GM12878 (cell line): ENCODE measurements at regions of chr1 and their contacts with region 1.

Region 1: GRCh38 chr1:225554216-225554812 is 98.6 kb downstream of the ENAH start:
- DNase-seq: no peak
- ATAC-seq: peak; percentile 61
- H3K4me3 ChIP-seq: no peak overlapping the region
- H3K27ac ChIP-seq: no peak overlapping the region
- H3K4me1 ChIP-seq: no peaks in the 10 kb centered on the region
- H3K27me3 ChIP-seq: no peaks in the 10 kb centered on the region
- CTCF ChIP-seq: peak; percentile 45 to 55 (median 50); a peak in 5 of 6 replicates
- EP300 ChIP-seq: no peak
- POLR2A ChIP-seq: no peak
- RAD21 ChIP-seq: peak; percentile 46; the same call in 1 of the 2 replicates

Region 2: GRCh38 chr1:225626698-225627097 is 72.4 kb after region 1 on chr1:
- CTCF ChIA-PET with region 1: no interaction called
- POLR2A ChIA-PET with region 1: no interaction called
- RAD21 ChIA-PET with region 1: no interaction called
- SMC1A ChIA-PET with region 1: no interaction called
- in situ Hi-C with region 1: no loop called
- intact Hi-C with region 1: no loop called
- DNase-seq: no peak
- ATAC-seq: no peak
- H3K4me3 ChIP-seq: no peak overlapping the region
- H3K27ac ChIP-seq: no peak overlapping the region
- H3K4me1 ChIP-seq: no peaks in the 10 kb centered on the region
- H3K27me3 ChIP-seq: no peaks in the 10 kb centered on the region; a peak in 1 of 4 replicates
- CTCF ChIP-seq: no peak
- EP300 ChIP-seq: no peak
- POLR2A ChIP-seq: no peak
- RAD21 ChIP-seq: no peak

Region 3: DNA sequence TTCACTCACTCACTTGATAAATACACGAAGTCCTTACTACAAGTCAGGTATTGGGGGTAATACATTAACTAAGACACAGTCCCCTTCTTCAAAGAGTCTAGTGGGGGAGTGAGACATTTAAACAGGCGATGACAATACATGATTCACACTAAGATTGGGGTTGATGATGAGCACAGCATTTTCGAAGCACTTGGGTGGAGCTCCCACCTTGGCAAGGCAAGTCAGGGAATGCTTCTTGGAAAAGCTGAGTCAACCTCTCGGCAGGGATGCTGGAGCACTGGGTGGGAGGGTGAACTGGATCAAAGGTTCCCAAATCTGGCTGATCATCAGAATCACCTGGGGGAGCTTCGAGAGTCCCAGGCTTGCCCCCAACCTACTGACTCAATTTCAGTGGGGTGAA is 156.5 kb after region 1 on chr1:
- CTCF ChIA-PET with region 1: no interaction called
- POLR2A ChIA-PET with region 1: no interaction called
- RAD21 ChIA-PET with region 1: no interaction called
- SMC1A ChIA-PET with region 1: no interaction called
- in situ Hi-C with region 1: no loop called
- intact Hi-C with region 1: no loop called
- DNase-seq: no peak
- ATAC-seq: no peak
- H3K4me3 ChIP-seq: no peak overlapping the region
- H3K27ac ChIP-seq: no peak overlapping the region
- H3K4me1 ChIP-seq: no peaks in the 10 kb centered on the region
- H3K27me3 ChIP-seq: no peaks in the 10 kb centered on the region; a peak in 1 of 4 replicates
- CTCF ChIP-seq: no peak
- EP300 ChIP-seq: no peak
- POLR2A ChIP-seq: no peak
- RAD21 ChIP-seq: no peak

Region 4: DNA sequence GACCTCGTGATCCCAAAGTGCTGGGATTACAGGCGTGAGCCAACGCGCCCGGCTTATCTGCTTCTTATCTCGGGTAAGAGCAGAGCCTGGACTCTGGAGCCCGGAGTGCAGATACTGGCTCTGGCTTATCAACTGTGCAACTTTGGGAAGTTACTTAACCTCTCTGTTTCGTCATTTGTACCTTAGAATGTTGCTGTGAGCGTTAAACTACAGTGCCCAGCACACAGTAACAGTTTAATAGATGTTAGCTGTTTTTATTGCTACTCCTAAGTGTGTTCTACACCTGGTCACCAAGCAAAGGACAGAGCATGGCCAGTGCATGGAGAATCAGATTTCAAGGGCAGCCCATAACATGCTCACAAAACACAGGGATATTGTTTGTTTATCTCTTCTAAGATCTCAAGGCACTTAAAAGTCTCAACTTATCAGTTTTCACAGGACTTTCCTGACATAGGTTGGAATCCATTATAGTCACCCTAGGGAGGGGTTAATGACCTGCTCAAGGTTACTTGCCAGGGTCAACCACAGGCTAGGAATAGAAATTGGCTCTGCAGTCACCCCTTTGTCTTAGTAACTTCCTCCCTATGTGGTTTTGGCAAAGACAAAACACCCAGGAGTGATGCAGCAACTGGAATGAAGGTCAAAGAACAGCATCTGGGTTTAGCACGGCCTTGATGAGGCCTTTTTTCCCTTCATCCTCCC is 200.8 kb after region 1 on chr1:
- CTCF ChIA-PET with region 1: no interaction called
- POLR2A ChIA-PET with region 1: no interaction called
- RAD21 ChIA-PET with region 1: no interaction called
- SMC1A ChIA-PET with region 1: no interaction called
- in situ Hi-C with region 1: no loop called
- intact Hi-C with region 1: no loop called
- DNase-seq: no peak
- ATAC-seq: no peak
- H3K4me3 ChIP-seq: no peak overlapping the region
- H3K27ac ChIP-seq: no peak overlapping the region
- H3K4me1 ChIP-seq: no peaks in the 10 kb centered on the region
- H3K27me3 ChIP-seq: no peaks in the 10 kb centered on the region; a peak in 1 of 4 replicates
- CTCF ChIP-seq: no peak
- EP300 ChIP-seq: no peak
- POLR2A ChIP-seq: no peak
- RAD21 ChIP-seq: no peak

Region 5: GRCh38 chr1:225772323-225772768 is 218.0 kb after region 1 on chr1:
- CTCF ChIA-PET with region 1: interaction called, 3 read pairs
- POLR2A ChIA-PET with region 1: no interaction called
- RAD21 ChIA-PET with region 1: no interaction called
- SMC1A ChIA-PET with region 1: interaction called, 9 read pairs
- in situ Hi-C with region 1: no loop called
- intact Hi-C with region 1: loop called (anchors 5 kb)
- DNase-seq: no peak
- ATAC-seq: peak; percentile 89
- H3K4me3 ChIP-seq: no peak overlapping the region
- H3K27ac ChIP-seq: no peak overlapping the region
- H3K4me1 ChIP-seq: no peaks in the 10 kb centered on the region
- H3K27me3 ChIP-seq: no peaks in the 10 kb centered on the region
- CTCF ChIP-seq: peak; percentile 57 to 63 (median 62); a peak in 5 of 6 replicates
- EP300 ChIP-seq: no peak
- POLR2A ChIP-seq: no peak
- RAD21 ChIP-seq: peak; percentile 62

Region 6: GRCh38 chr1:225845571-225846259 is 291.4 kb after region 1 on chr1:
- CTCF ChIA-PET with region 1: no interaction called
- POLR2A ChIA-PET with region 1: no interaction called
- RAD21 ChIA-PET with region 1: no interaction called
- SMC1A ChIA-PET with region 1: no interaction called
- in situ Hi-C with region 1: no loop called
- intact Hi-C with region 1: loop called (anchors 10 kb)
- DNase-seq: no peak
- ATAC-seq: peak; percentile 36
- H3K4me3 ChIP-seq: no peak overlapping the region
- H3K27ac ChIP-seq: no peak overlapping the region
- H3K4me1 ChIP-seq: peaks cover 34% of the 10 kb centered on the region
- H3K27me3 ChIP-seq: no peaks in the 10 kb centered on the region
- CTCF ChIP-seq: peak; percentile 43 to 59 (median 47)
- EP300 ChIP-seq: no peak
- POLR2A ChIP-seq: peak; percentile 27
- RAD21 ChIP-seq: peak; percentile 68

Region 7: GRCh38 chr1:225977937-225978748 is 423.8 kb after region 1 on chr1:
- CTCF ChIA-PET with region 1: no interaction called
- POLR2A ChIA-PET with region 1: no interaction called
- RAD21 ChIA-PET with region 1: no interaction called
- SMC1A ChIA-PET with region 1: no interaction called
- in situ Hi-C with region 1: no loop called
- intact Hi-C with region 1: loop called (anchors 2 kb)
- DNase-seq: peak; percentile 45
- ATAC-seq: peak; percentile 85
- H3K4me3 ChIP-seq: no peak overlapping the region
- H3K27ac ChIP-seq: no peak overlapping the region
- H3K4me1 ChIP-seq: 0 out of 2 replicates have a peak, but pooled peaks cover 5% of the 10 kb centered on the region
- H3K27me3 ChIP-seq: no peaks in the 10 kb centered on the region
- CTCF ChIP-seq: peak; percentile 9 to 54 (median 11); a peak in 4 of 6 replicates
- EP300 ChIP-seq: no peak
- POLR2A ChIP-seq: no peak
- RAD21 ChIP-seq: peak; percentile 51